PC-9 (cell line): ENCODE measurements at regions of chr11 and their contacts with region 1.

Region 1: GRCh38 chr11:62665075-62665598 is at the starts of genes C11orf98 and CSKMT:
- DNase-seq: peak; percentile 87 to 98
- H3K4me3 ChIP-seq: peak within 1 kb of the TSS; percentile 88
- H3K27ac ChIP-seq: peak within 1 kb of the TSS; percentile 72
- H3K4me1 ChIP-seq: peaks cover 33% of the 10 kb centered on the region
- H3K27me3 ChIP-seq: no peaks in the 10 kb centered on the region
- CTCF ChIP-seq: no peak
- total RNA-seq, gene C11orf98: 86.7 and 94.9 TPM in 2 replicates
- total RNA-seq, gene CSKMT: 19.2 and 51.9 TPM in 2 replicates

Region 2: GRCh38 chr11:62233730-62234129 is 431.4 kb before region 1 on chr11:
- CTCF ChIA-PET with region 1: no interaction called
- POLR2A ChIA-PET with region 1: no interaction called
- intact Hi-C with region 1: no loop called
- DNase-seq: no peak
- H3K4me3 ChIP-seq: no peak overlapping the region
- H3K27ac ChIP-seq: no peak overlapping the region
- H3K4me1 ChIP-seq: no peaks in the 10 kb centered on the region
- H3K27me3 ChIP-seq: peaks cover 74% of the 10 kb centered on the region
- CTCF ChIP-seq: peak; percentile 29; the same call in 1 of the 2 replicates

Region 3: GRCh38 chr11:62542750-62543567 is 122.2 kb before region 1 on chr11:
- CTCF ChIA-PET with region 1: no interaction called
- POLR2A ChIA-PET with region 1: interaction called, 3 read pairs
- intact Hi-C with region 1: loop called (anchors 5 kb)
- DNase-seq: peak; percentile 76 to 90
- H3K4me3 ChIP-seq: peak overlapping the region; percentile 98
- H3K27ac ChIP-seq: peak overlapping the region; percentile 72
- H3K4me1 ChIP-seq: peaks cover 78% of the 10 kb centered on the region
- H3K27me3 ChIP-seq: no peaks in the 10 kb centered on the region
- CTCF ChIP-seq: peak; percentile 100

Region 4: DNA sequence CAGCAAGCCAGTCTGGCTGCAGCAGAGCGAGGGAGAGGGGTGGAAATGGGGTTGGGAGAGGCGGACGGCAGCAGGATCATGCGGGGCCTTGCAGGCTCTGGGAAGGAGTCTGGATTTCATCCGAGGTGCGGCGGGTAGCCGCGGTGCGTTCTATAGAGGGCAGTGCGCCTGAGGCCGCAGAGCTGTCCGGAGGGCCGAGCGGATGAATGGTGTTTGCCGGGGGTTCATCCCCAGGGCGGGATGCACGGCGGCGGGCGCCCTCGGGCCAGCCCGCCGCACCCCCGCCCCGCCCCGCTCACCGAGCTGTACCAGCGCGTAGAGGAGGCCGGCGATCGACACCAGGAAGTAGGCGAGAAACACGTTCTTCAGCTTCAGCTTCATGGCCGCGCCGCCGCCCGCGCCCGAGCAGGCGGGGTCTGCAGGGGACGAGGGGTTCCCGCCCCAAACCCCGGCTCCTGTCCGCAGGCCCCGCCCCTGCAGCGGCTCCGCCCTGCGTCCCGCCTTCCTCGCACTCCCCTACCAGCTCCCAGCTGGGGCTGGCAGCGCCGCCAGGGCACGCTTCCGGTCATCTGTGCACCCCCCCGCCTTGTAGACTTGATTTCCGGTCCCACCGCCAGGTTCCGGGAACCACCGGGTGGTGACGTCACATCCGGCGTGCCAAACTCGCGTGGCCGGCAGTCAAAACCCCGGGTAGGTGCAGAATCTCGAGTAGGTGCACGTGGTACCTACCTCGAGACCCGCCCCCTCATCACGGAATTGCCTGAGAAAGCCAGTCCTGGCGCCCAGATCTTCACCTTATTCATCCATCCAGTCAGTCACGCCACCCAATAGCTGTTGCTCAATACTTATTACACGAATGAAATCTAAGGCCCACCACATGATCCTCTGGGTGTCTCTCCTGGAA is 43.3 kb before region 1 on chr11 and contains the start of gene B3GAT3:
- CTCF ChIA-PET with region 1: no interaction called
- POLR2A ChIA-PET with region 1: interaction called, 15 read pairs
- intact Hi-C with region 1: loop called (anchors 5 kb)
- DNase-seq: peak; percentile 97 to 100
- H3K4me3 ChIP-seq: peak within 1 kb of the TSS; percentile 79
- H3K27ac ChIP-seq: peak within 1 kb of the TSS; percentile 86
- H3K4me1 ChIP-seq: peaks cover 20% of the 10 kb centered on the region
- H3K27me3 ChIP-seq: no peaks in the 10 kb centered on the region
- CTCF ChIP-seq: no peak
- total RNA-seq, gene B3GAT3: 38.9 and 60.5 TPM in 2 replicates

Region 5: GRCh38 chr11:62753736-62754603 is 88.8 kb after region 1 on chr11 and contains the start of gene ZBTB3:
- CTCF ChIA-PET with region 1: no interaction called
- POLR2A ChIA-PET with region 1: interaction called, 22 read pairs
- intact Hi-C with region 1: no loop called
- DNase-seq: peak; percentile 98
- H3K4me3 ChIP-seq: peak within 1 kb of the TSS; percentile 63
- H3K27ac ChIP-seq: peak within 1 kb of the TSS; percentile 46
- H3K4me1 ChIP-seq: peaks cover 17% of the 10 kb centered on the region
- H3K27me3 ChIP-seq: no peaks in the 10 kb centered on the region
- CTCF ChIP-seq: no peak
- total RNA-seq, gene ZBTB3: 16.5 and 17.2 TPM in 2 replicates

Region 6: DNA sequence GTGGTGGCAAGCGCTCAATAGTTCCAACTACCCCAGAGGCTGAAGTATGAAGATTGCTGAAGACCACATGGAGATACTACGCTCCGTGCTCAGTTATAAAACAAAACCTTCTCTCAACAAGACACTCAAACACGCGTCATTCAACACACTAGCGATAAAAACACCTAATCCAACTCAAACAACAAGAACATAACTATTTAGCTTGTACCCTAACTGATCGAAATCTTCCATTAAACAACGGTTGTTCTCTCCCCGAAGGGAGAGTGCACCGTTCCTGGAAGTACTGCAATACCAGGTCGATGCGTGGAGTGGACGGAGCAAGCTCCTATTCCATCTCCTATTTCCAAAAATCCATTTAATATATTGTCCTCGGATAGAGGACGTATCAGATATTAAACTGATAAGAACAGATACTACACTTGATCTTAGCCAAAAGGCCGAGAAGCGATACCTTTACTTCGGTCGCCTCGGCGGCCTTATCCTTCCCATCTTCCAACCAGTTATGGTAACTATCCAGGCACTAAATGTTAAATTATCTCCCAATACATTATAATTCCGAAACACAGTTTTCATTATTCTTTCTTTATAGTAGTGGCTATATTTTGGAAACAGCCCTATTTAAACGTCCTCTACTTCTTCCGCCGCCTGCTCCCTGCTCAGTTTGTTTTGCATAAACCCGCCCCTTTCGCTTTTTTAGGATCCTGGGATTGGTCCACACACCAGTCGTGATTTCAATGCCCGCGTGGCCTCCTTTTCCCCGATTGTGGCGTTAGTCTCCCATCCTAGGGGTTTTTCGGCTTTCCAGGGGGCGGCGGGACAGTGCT is 176.4 kb after region 1 on chr11:
- CTCF ChIA-PET with region 1: no interaction called
- POLR2A ChIA-PET with region 1: interaction called, 11 read pairs
- intact Hi-C with region 1: no loop called
- DNase-seq: peak; percentile 92 to 100
- H3K4me3 ChIP-seq: peak overlapping the region; percentile 89
- H3K27ac ChIP-seq: peak overlapping the region; percentile 94
- H3K4me1 ChIP-seq: peaks cover 17% of the 10 kb centered on the region
- H3K27me3 ChIP-seq: no peaks in the 10 kb centered on the region
- CTCF ChIP-seq: no peak

Region 7: GRCh38 chr11:62922658-62923431 is 257.7 kb after region 1 on chr11:
- CTCF ChIA-PET with region 1: no interaction called
- POLR2A ChIA-PET with region 1: no interaction called
- intact Hi-C with region 1: no loop called
- DNase-seq: peak in 1 of 2 experiments; percentile 40
- H3K4me3 ChIP-seq: no peak overlapping the region
- H3K27ac ChIP-seq: no peak overlapping the region
- H3K4me1 ChIP-seq: no peaks in the 10 kb centered on the region
- H3K27me3 ChIP-seq: peaks cover 88% of the 10 kb centered on the region
- CTCF ChIP-seq: peak; percentile 32; the same call in 1 of the 2 replicates